Activated naive CD4-positive, alpha-beta T cell treated with anti-CD3 and anti-CD28 coated beads, Interleukin-2, amount 10 ng/mL, durations not matched to agents 7 days and 5 days (primary cell): ENCODE measurements at regions of chr9 and their contacts with region 1.

Region 1: GRCh38 chr9:89179895-89180667 is 1.5 kb upstream of the SHC3 start:
- DNase-seq: peak; percentile 48
- H3K4me3 Mint-ChIP-seq: peak overlapping the region; percentile 35
- H3K27ac Mint-ChIP-seq: no peak overlapping the region
- H3K4me1 Mint-ChIP-seq: peaks cover 21% of the 10 kb centered on the region
- H3K27me3 Mint-ChIP-seq: peaks cover 88% of the 10 kb centered on the region

Region 2: GRCh38 chr9:89278997-89279739 is 99.1 kb after region 1 on chr9:
- CTCF ChIA-PET with region 1: interaction called, 10 read pairs
- DNase-seq: no peak
- H3K4me3 Mint-ChIP-seq: no peak overlapping the region
- H3K27ac Mint-ChIP-seq: no peak overlapping the region
- H3K4me1 Mint-ChIP-seq: peaks cover 45% of the 10 kb centered on the region
- H3K27me3 Mint-ChIP-seq: peaks cover 48% of the 10 kb centered on the region

Region 3: GRCh38 chr9:89304020-89304833 is 124.1 kb after region 1 on chr9:
- CTCF ChIA-PET with region 1: no interaction called
- DNase-seq: no peak
- H3K4me3 Mint-ChIP-seq: no peak overlapping the region
- H3K27ac Mint-ChIP-seq: no peak overlapping the region
- H3K4me1 Mint-ChIP-seq: peaks cover 7% of the 10 kb centered on the region
- H3K27me3 Mint-ChIP-seq: no peaks in the 10 kb centered on the region